ENCODE measurements at regions of chr3 and their contacts with region 1.

Region 1: GRCh38 chr3:20589275-20589674 is 403.3 kb upstream of the SGO1 start:
- DNase-seq: no peak
- H3K4me3 ChIP-seq: no peak overlapping the region
- H3K27ac ChIP-seq: no peak overlapping the region
- H3K4me1 ChIP-seq: no peaks in the 10 kb centered on the region
- H3K27me3 ChIP-seq: no peaks in the 10 kb centered on the region
- CTCF ChIP-seq: no peak

Region 2: GRCh38 chr3:20173844-20174410 is 415.3 kb before region 1 on chr3:
- CTCF ChIA-PET with region 1: no interaction called
- POLR2A ChIA-PET with region 1: interaction called, 12 read pairs
- intact Hi-C with region 1: no loop called
- DNase-seq: no peak
- H3K4me3 ChIP-seq: no peak overlapping the region
- H3K27ac ChIP-seq: no peak overlapping the region
- H3K4me1 ChIP-seq: no peaks in the 10 kb centered on the region
- H3K27me3 ChIP-seq: no peaks in the 10 kb centered on the region
- CTCF ChIP-seq: no peak

Region 3: GRCh38 chr3:21747376-21747775 is 1158.1 kb after region 1 on chr3:
- CTCF ChIA-PET with region 1: no interaction called
- POLR2A ChIA-PET with region 1: no interaction called
- intact Hi-C with region 1: no loop called
- DNase-seq: no peak
- H3K4me3 ChIP-seq: no peak overlapping the region
- H3K27ac ChIP-seq: no peak overlapping the region
- H3K4me1 ChIP-seq: no peaks in the 10 kb centered on the region
- H3K27me3 ChIP-seq: no peaks in the 10 kb centered on the region
- CTCF ChIP-seq: no peak

Measured in PC-9 (cell line).